ENCODE measurements at regions of chr7 and their contacts with region 1.

Region 1: DNA sequence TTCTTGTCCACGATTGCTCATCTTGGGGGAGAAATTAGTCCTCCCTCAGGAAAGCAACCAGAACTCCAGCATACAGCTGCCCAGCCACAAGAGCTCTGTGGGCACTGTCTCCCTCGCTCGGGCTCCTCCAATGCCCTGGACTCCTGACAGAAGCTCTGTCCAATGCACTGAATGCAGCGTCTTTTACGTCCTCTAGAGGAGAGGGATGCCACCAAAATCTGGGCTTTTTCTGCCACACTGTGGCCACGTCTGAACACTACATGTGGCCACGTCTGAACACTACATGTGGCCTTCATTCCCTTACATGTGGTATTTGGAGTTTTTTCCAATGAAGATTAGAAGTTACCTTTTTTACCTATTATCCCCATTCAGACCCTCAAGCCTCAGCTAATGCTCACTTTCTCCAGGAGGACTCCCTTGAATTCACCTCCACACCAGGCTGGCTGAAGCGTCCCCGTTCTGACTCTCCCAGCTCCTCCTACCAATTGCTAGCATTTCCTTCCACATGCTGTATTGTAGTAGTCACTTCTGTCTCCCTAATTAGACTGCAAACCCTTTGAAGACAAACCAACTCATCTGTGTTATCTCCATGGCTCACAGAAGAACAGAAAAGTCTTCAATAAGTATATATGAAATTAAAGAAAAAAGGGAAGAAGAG is 134.3 kb upstream of the PDE1C start:
- DNase-seq: peak; percentile 5
- ATAC-seq: peak; percentile 97
- H3K4me3 ChIP-seq: no peak overlapping the region
- H3K27ac ChIP-seq: no peak overlapping the region
- H3K4me1 ChIP-seq: no peaks in the 10 kb centered on the region
- H3K27me3 ChIP-seq: no peaks in the 10 kb centered on the region; a peak in 1 of 4 replicates
- CTCF ChIP-seq: peak; percentile 56 to 61 (median 56); a peak in 4 of 6 replicates
- EP300 ChIP-seq: no peak
- POLR2A ChIP-seq: no peak
- RAD21 ChIP-seq: peak; percentile 81

Region 2: DNA sequence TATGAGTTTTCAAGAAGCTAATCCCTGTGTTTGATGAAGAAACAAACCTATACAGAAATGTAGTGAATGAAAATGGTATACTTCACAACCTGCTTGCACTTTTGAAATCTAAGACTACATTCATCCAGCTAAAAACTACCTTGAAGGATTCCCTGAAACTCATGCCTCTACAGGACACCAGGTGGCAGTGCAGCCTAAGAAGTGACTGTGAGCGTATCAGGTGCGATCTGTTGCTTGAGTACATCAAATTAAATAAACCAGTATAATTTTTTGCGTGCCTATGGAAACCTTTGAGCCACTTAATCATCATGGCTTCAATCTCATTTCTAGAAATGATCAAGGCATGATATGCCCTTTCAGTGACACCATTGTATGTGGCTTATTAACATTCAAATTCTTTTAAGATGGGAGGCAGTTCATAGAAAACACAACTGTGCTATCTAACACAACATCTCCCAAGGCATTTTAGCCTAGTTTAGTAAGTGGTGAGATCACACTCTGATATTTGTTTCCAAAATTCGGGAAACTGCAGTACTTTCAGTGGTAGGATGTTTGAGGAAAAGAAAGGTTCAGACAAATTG is 460.1 kb before region 1 on chr7:
- CTCF ChIA-PET with region 1: interaction called, 51 read pairs
- POLR2A ChIA-PET with region 1: no interaction called
- RAD21 ChIA-PET with region 1: interaction called, 25 read pairs
- SMC1A ChIA-PET with region 1: interaction called, 20 read pairs
- in situ Hi-C with region 1: loop called (anchors 5 kb)
- intact Hi-C with region 1: loop called (anchors 1 kb)
- DNase-seq: peak; percentile 33
- ATAC-seq: peak; percentile 89
- H3K4me3 ChIP-seq: no peak overlapping the region
- H3K27ac ChIP-seq: no peak overlapping the region
- H3K4me1 ChIP-seq: no peaks in the 10 kb centered on the region
- H3K27me3 ChIP-seq: no peaks in the 10 kb centered on the region
- CTCF ChIP-seq: peak; percentile 76 to 88 (median 83)
- EP300 ChIP-seq: no peak
- POLR2A ChIP-seq: no peak
- RAD21 ChIP-seq: peak; percentile 98

Region 3: GRCh38 chr7:32042900-32043299 is 161.6 kb before region 1 on chr7:
- CTCF ChIA-PET with region 1: interaction called, 5 read pairs
- POLR2A ChIA-PET with region 1: no interaction called
- RAD21 ChIA-PET with region 1: interaction called, 10 read pairs
- SMC1A ChIA-PET with region 1: interaction called, 5 read pairs
- in situ Hi-C with region 1: no loop called
- intact Hi-C with region 1: no loop called
- DNase-seq: no peak
- ATAC-seq: peak; percentile 33
- H3K4me3 ChIP-seq: no peak overlapping the region
- H3K27ac ChIP-seq: no peak overlapping the region
- H3K4me1 ChIP-seq: no peaks in the 10 kb centered on the region
- H3K27me3 ChIP-seq: no peaks in the 10 kb centered on the region
- CTCF ChIP-seq: peak in 1 of 3 experiments; percentile 14; a peak in 1 of 6 replicates
- EP300 ChIP-seq: no peak
- POLR2A ChIP-seq: no peak
- RAD21 ChIP-seq: peak; percentile 21; the same call in 1 of the 2 replicates

Region 4: GRCh38 chr7:32163141-32163806 is 41.2 kb before region 1 on chr7:
- CTCF ChIA-PET with region 1: no interaction called
- POLR2A ChIA-PET with region 1: no interaction called
- RAD21 ChIA-PET with region 1: no interaction called
- SMC1A ChIA-PET with region 1: no interaction called
- in situ Hi-C with region 1: no loop called
- intact Hi-C with region 1: no loop called
- DNase-seq: no peak
- ATAC-seq: no peak
- H3K4me3 ChIP-seq: no peak overlapping the region
- H3K27ac ChIP-seq: no peak overlapping the region
- H3K4me1 ChIP-seq: no peaks in the 10 kb centered on the region
- H3K27me3 ChIP-seq: 0 out of 4 replicates have a peak, but pooled peaks cover 0 to 2% of the 10 kb centered on the region in 2 experiments
- CTCF ChIP-seq: no peak
- EP300 ChIP-seq: no peak
- POLR2A ChIP-seq: no peak
- RAD21 ChIP-seq: no peak

Region 5: DNA sequence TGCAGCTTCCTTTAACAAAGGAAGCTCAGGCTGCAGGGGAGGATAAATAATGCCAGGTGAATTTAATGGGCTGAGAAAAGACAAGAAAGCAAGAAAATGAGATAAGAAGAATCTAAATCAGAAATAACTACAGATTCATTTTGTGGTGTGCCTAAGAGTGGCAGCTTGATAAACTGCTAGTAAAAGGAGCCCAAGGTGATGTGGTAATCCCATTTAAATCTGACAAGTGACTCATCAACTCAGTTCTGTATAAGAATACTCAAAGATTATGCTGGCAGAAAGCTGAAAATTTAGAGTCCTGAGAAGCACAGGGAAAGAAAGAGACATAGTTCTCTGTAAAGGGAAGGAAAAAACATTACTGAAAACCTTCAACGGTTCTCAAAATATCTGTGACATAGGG is 24.9 kb before region 1 on chr7:
- CTCF ChIA-PET with region 1: no interaction called
- POLR2A ChIA-PET with region 1: no interaction called
- RAD21 ChIA-PET with region 1: no interaction called
- SMC1A ChIA-PET with region 1: no interaction called
- in situ Hi-C with region 1: no loop called
- intact Hi-C with region 1: no loop called
- DNase-seq: no peak
- ATAC-seq: no peak
- H3K4me3 ChIP-seq: no peak overlapping the region
- H3K27ac ChIP-seq: no peak overlapping the region
- H3K4me1 ChIP-seq: no peaks in the 10 kb centered on the region
- H3K27me3 ChIP-seq: no peaks in the 10 kb centered on the region; a peak in 1 of 4 replicates
- CTCF ChIP-seq: no peak
- EP300 ChIP-seq: no peak
- POLR2A ChIP-seq: no peak
- RAD21 ChIP-seq: no peak

Region 6: GRCh38 chr7:32347244-32347828 is 142.8 kb after region 1 on chr7:
- CTCF ChIA-PET with region 1: interaction called, 100 read pairs
- POLR2A ChIA-PET with region 1: no interaction called
- RAD21 ChIA-PET with region 1: interaction called, 50 read pairs
- SMC1A ChIA-PET with region 1: interaction called, 52 read pairs
- in situ Hi-C with region 1: no loop called
- intact Hi-C with region 1: no loop called
- DNase-seq: no peak
- ATAC-seq: peak; percentile 70
- H3K4me3 ChIP-seq: no peak overlapping the region
- H3K27ac ChIP-seq: no peak overlapping the region
- H3K4me1 ChIP-seq: no peaks in the 10 kb centered on the region
- H3K27me3 ChIP-seq: no peaks in the 10 kb centered on the region
- CTCF ChIP-seq: peak; percentile 62 to 66 (median 64)
- EP300 ChIP-seq: no peak
- POLR2A ChIP-seq: no peak
- RAD21 ChIP-seq: peak; percentile 57

Region 7: GRCh38 chr7:32357535-32358277 is 153.2 kb after region 1 on chr7:
- CTCF ChIA-PET with region 1: interaction called, 81 read pairs
- POLR2A ChIA-PET with region 1: no interaction called
- RAD21 ChIA-PET with region 1: interaction called, 3 read pairs
- SMC1A ChIA-PET with region 1: interaction called, 28 read pairs
- in situ Hi-C with region 1: no loop called
- intact Hi-C with region 1: no loop called
- DNase-seq: no peak
- ATAC-seq: peak; percentile 49
- H3K4me3 ChIP-seq: no peak overlapping the region
- H3K27ac ChIP-seq: no peak overlapping the region
- H3K4me1 ChIP-seq: no peaks in the 10 kb centered on the region
- H3K27me3 ChIP-seq: peaks cover 2% of the 10 kb centered on the region in 2 experiments; a peak in 1 of 4 replicates
- CTCF ChIP-seq: peak in 1 of 3 experiments; percentile 35; a peak in 1 of 6 replicates
- EP300 ChIP-seq: no peak
- POLR2A ChIP-seq: no peak
- RAD21 ChIP-seq: peak; percentile 42

Region 8: DNA sequence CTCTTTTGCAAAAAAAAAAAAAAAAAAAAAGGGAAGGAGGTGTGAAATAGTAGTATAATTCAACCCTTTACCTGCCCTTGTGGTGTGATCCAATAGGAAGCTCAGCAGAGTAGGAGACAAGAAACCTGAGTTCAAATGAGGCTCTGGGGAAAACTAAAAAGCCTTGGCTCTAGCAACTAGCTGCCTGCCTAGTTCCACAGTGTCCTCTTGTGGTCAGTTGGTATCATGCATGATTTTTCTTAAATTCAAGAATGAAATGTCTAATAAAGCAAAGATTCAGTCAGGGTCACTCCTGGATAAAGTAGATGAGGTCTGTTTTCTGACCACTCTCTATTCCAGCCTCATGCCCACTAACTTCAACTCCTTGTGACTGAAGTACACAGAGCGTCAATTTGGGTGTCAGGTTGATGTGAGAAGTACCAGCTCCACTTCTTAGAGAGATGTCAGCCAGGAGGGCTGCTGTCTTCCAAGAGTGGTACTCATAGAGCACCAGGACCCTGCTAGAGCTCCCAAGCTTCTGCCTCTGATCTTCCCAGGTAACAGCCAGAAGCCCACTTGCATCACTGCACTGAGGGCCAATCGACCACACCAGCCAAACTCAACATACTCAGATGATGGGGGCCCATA is 275.2 kb after region 1 on chr7:
- CTCF ChIA-PET with region 1: interaction called, 24 read pairs
- POLR2A ChIA-PET with region 1: no interaction called
- RAD21 ChIA-PET with region 1: interaction called, 17 read pairs
- SMC1A ChIA-PET with region 1: interaction called, 17 read pairs
- in situ Hi-C with region 1: no loop called
- intact Hi-C with region 1: no loop called
- DNase-seq: no peak
- ATAC-seq: peak; percentile 62
- H3K4me3 ChIP-seq: no peak overlapping the region
- H3K27ac ChIP-seq: no peak overlapping the region
- H3K4me1 ChIP-seq: no peaks in the 10 kb centered on the region
- H3K27me3 ChIP-seq: no peaks in the 10 kb centered on the region
- CTCF ChIP-seq: peak; percentile 75 to 78 (median 77)
- EP300 ChIP-seq: no peak
- POLR2A ChIP-seq: no peak
- RAD21 ChIP-seq: peak; percentile 82

Measured in GM12878 (cell line).